ENCODE measurements at regions of chr1 and their contacts with region 1.

Region 1: DNA sequence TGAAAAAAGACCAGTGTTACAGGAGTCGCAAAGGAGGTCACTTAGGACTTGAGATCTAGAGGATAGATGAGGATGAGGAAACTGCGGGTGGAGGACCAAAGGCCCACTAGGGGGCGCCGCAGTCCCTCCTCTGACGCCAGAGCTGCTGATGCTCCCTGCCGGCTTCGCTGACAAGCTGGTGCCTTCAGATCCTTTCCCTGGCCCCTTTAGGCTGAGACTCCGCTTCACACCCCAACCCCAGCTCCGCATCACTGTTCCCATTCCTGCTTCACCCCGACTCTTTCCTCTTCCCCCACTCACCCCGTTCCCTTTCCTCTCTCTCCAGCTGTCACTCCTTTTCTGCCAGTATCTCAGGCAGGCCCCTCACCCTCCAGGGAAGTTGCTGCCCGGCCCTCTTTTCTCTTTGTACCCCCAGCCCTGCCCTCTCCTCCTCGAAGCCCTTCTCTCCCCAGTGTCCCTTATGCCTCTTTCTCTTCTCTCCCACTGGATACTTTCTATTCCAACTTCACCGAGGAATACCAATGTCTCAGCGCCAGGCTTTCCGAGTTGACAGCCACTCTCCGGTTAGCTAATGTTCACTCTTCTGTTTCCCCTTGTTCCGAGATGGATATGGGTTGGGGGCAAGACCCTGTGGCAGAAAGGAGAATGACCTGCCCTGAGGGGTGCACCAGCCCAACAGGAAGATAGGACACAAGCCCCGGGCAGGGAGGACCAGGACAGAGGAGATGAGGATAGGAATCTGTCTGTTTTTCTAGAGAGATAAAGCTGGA is 4.5 kb downstream of the KCNJ9 start:
- DNase-seq: peak; percentile 64 to 77 (median 75)
- H3K4me3 ChIP-seq: no peak overlapping the region
- H3K4me3 Mint-ChIP-seq: no peak overlapping the region
- H3K27ac ChIP-seq: no peak overlapping the region
- H3K27ac Mint-ChIP-seq: peak overlapping the region in 1 of 7 donors; percentile 37
- H3K4me1 ChIP-seq: peaks cover 3 to 11% of the 10 kb centered on the region in 2 donors
- H3K4me1 Mint-ChIP-seq: peaks cover 16% of the 10 kb centered on the region
- H3K27me3 ChIP-seq: peaks cover 17 to 40% of the 10 kb centered on the region in 2 donors
- H3K27me3 Mint-ChIP-seq: peaks cover 26 to 49% (median 42%) of the 10 kb centered on the region in 3 donors
- CTCF ChIP-seq: peak; percentile 90

Region 2: DNA sequence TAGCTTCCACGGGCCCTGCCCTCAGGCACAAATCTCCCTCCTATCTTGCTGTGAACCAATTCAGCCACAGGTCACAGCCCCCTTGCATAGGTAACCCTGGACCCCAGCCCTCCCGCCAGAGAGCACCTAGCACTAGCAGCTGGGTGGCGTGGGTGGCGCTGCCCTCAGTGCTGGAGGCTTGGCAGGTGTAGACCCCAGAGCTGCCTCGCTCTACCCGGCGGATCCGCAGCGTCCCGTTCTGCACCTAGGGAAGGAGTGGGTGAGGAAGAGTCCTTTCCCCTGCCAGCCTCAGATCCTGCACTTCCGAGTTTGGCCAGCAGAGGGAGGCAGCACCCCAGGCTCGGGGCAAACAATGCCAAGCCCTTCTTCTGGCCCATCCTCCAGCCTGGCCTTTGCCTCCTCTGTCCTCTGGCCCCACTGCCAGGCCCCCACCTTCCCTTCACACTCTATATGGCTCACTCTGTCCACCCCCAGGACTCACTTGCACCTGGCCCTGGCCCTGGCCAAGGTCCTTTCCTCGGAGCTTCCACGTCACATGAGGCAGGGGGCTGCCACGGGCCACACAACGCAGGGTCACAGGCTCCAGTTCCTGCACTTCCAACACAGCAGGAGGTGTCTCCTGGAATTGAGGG is 149.5 kb before region 1 on chr1:
- intact Hi-C with region 1: loop called (anchors 5 to 10 kb)
- DNase-seq: peak; percentile 65 to 72 (median 69)
- H3K4me3 ChIP-seq: peak overlapping the region in 1 of 3 experiments; percentile 63
- H3K4me3 Mint-ChIP-seq: no peak overlapping the region
- H3K27ac ChIP-seq: peak overlapping the region in 1 of 2 donors; percentile 43
- H3K27ac Mint-ChIP-seq: peak overlapping the region in 6 of 7 donors; percentile 17 to 75 (median 48)
- H3K4me1 ChIP-seq: peaks cover 40 to 50% of the 10 kb centered on the region in 2 donors
- H3K4me1 Mint-ChIP-seq: peaks cover 57% of the 10 kb centered on the region
- H3K27me3 ChIP-seq: no peaks in the 10 kb centered on the region
- H3K27me3 Mint-ChIP-seq: peaks cover 0 to 2% (median 2%) of the 10 kb centered on the region in 3 donors
- CTCF ChIP-seq: peak; percentile 99

Region 3: GRCh38 chr1:160046494-160047110 is 39.3 kb before region 1 on chr1:
- intact Hi-C with region 1: loop called (anchors 5 kb)
- DNase-seq: peak; percentile 30 to 54 (median 39)
- H3K4me3 ChIP-seq: peak overlapping the region in 2 of 3 experiments; percentile 3 to 62
- H3K4me3 Mint-ChIP-seq: peak overlapping the region; percentile 75 to 91
- H3K27ac ChIP-seq: no peak overlapping the region
- H3K27ac Mint-ChIP-seq: peak overlapping the region in 2 of 7 donors; percentile 26 to 66
- H3K4me1 ChIP-seq: peaks cover 8 to 10% of the 10 kb centered on the region in 2 donors
- H3K4me1 Mint-ChIP-seq: peaks cover 13% of the 10 kb centered on the region
- H3K27me3 ChIP-seq: peaks cover 2 to 12% of the 10 kb centered on the region in 2 donors
- H3K27me3 Mint-ChIP-seq: peaks cover 9 to 19% (median 15%) of the 10 kb centered on the region in 3 donors
- CTCF ChIP-seq: peak; percentile 78

Region 4: DNA sequence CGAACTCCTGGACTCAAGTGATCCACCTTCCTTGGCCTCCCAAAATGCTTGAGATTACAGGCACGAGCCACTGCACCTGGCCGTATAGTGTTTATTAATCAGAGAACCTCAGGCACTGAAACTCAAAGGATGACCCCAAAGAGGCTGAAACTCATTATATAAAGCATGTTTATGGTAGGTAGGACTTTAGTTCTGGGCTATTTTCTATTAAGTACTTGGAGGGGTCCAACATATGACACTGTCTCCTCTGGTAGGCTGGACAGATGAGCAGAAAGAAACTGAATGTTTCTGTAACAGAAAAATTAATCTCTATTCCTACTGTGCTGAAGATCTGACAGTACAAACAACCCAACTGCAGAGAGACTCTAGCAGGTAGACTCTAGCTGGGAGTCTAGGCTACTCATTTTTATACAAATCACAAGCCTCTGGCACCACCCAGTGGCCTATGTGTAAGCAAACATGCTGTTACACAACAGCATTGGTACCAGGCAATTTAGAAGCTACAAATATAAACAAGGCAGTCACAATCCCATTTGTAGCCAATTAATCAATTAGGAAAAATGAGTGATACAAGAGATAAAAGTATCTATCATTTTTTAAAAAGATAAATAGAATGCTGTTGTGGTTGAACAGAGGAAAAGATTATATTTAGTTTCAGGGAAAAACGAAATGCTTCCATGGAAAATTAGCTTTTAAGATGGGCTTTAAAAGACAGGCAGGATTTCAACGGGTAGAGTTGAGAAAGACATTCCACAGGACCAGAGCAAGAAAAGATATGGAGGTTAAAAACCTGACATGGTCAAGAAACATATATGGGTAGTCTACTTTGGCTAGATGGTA is 166.0 kb after region 1 on chr1:
- intact Hi-C with region 1: loop called in 1 of 2 experiments (anchors 5 kb)
- DNase-seq: peak; percentile 45 to 71 (median 63)
- H3K4me3 ChIP-seq: no peak overlapping the region
- H3K4me3 Mint-ChIP-seq: no peak overlapping the region
- H3K27ac ChIP-seq: peak overlapping the region in 1 of 2 donors; percentile 32
- H3K27ac Mint-ChIP-seq: peak overlapping the region in 3 of 7 donors; percentile 58 to 68 (median 60)
- H3K4me1 ChIP-seq: no peaks in the 10 kb centered on the region
- H3K4me1 Mint-ChIP-seq: peaks cover 2% of the 10 kb centered on the region
- H3K27me3 ChIP-seq: no peaks in the 10 kb centered on the region
- H3K27me3 Mint-ChIP-seq: peaks cover 0 to 3% (median 0%) of the 10 kb centered on the region in 3 donors
- CTCF ChIP-seq: peak; percentile 78

Region 5: DNA sequence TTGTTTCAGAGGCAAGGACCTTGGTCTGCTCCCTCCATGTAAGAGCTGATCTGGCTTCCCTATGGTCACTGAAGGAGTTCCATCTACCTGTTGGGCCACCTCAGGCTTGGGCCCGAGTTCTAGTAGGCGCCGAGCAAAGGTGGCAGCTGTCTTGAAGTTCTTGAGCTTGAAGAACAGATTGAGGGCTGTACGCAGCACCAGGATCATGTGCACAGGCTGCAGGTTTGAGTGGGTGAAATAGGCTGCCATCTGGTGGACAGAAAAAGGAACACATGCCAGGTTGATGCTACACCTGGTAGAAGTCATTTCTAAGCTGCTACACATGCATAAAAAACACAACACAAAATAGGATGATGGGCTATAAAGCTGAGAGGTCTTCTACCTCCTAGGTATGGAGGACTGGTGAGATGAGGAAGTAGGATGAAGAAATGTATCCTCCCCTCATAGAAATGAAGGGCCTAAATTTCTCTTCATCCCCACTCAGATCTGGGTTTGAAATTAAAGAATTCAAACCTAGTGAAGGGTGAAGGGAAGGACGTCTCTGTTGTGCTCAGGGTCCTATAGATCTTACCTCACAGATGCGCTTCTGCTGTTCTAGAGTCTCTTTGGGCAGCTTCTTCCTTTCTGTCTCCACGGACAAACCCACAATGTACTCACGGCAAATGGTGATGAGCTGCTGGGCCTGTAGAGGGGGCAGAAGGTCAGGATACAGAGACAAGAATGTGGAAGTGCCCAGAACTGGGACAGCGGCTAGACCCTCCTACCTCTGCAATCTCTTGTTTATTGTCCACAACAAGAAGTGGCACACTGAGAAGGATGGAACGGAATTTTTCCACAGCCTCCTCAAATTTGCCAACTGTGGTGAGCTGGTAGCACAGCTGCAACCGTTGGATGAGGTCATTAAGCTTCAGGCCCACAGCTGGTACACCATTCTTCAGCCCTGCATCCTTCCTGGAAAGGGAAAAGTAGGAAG is 205.7 kb after region 1 on chr1:
- intact Hi-C with region 1: loop called in 1 of 2 experiments (anchors 5 kb)
- DNase-seq: peak; percentile 47 to 58 (median 57)
- H3K4me3 ChIP-seq: no peak overlapping the region
- H3K4me3 Mint-ChIP-seq: no peak overlapping the region
- H3K27ac ChIP-seq: peak overlapping the region in 1 of 2 donors; percentile 50
- H3K27ac Mint-ChIP-seq: peak overlapping the region; percentile 62 to 86 (median 69)
- H3K4me1 ChIP-seq: no peaks in the 10 kb centered on the region
- H3K4me1 Mint-ChIP-seq: peaks cover 3% of the 10 kb centered on the region
- H3K27me3 ChIP-seq: no peaks in the 10 kb centered on the region
- H3K27me3 Mint-ChIP-seq: no peaks in the 10 kb centered on the region
- CTCF ChIP-seq: peak; percentile 91

Measured in CD14-positive monocyte (primary cell).